ENCODE measurements at regions of chr13 and their contacts with region 1.

Region 1: DNA sequence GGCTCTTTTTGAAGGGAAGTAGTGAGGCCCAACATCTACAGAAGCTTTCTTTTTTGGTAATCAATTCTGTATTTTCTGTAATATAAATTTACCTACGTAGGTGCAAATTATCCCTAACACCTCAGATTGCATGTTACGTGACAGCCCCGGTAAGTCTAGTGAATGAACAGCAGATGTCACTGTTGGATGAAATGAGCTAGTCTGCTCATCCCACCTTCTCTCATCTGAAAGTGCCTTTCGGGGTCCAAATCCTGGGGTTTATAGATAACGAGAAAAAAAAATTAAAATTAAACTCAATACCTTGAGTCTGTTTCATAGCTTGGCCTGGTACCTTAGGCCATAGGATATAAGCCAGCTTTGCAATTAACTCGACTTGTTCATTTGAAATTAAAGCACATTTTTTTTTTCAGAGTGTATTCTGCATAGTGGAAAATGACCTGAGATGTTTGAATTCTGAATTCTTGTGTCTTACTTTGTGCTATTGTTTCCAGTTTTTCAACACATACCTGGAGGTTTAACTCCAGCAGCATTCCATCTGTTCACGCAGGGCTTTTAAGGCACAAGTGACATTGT is 548.2 kb downstream of the GPC5 start:
- DNase-seq: no peak
- H3K4me3 ChIP-seq: no peak overlapping the region
- H3K27ac ChIP-seq: no peak overlapping the region
- H3K4me1 ChIP-seq: no peaks in the 10 kb centered on the region
- H3K27me3 ChIP-seq: no peaks in the 10 kb centered on the region
- CTCF ChIP-seq: peak; percentile 38

Region 2: DNA sequence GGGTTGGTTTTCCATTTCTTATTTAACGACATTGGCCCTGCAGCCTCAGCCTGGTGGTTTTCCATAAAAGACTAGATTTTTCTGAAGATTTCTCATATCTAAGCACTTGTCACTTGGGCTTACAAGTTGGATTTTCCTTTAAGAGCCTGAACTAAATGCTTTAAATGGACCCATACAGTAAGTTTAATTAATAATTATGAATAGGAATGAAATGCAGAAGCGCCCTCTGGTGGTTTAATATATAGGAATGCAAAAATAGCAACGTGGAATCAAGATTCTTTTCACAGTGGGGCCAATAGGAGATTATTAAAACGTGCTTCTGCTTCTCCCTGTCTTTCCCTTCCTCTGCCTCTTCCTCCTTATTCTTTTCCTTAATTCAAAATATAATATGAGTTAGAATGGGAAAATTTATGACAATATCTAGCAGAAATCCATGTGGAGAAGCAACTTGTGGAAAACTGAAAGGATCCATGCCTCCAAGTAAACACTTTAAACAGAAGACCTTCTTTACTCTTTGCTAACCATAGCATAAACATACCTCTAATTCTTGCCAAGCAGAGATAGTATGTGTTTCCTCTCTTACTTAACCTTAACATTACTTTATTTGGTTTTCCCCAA is 224.2 kb before region 1 on chr13:
- intact Hi-C with region 1: no loop called
- DNase-seq: no peak
- H3K4me3 ChIP-seq: no peak overlapping the region
- H3K27ac ChIP-seq: no peak overlapping the region
- H3K4me1 ChIP-seq: no peaks in the 10 kb centered on the region
- H3K27me3 ChIP-seq: no peaks in the 10 kb centered on the region
- CTCF ChIP-seq: peak; percentile 65

Region 3: GRCh38 chr13:92074658-92075057 is 128.1 kb after region 1 on chr13:
- intact Hi-C with region 1: loop called (anchors 10 kb)
- DNase-seq: no peak
- H3K4me3 ChIP-seq: no peak overlapping the region
- H3K27ac ChIP-seq: no peak overlapping the region
- H3K4me1 ChIP-seq: no peaks in the 10 kb centered on the region
- H3K27me3 ChIP-seq: no peaks in the 10 kb centered on the region
- CTCF ChIP-seq: no peak

Measured in colonic mucosa (tissue), 4 donors.